ENCODE measurements at regions of chr1 and their contacts with region 1.

Region 1: DNA sequence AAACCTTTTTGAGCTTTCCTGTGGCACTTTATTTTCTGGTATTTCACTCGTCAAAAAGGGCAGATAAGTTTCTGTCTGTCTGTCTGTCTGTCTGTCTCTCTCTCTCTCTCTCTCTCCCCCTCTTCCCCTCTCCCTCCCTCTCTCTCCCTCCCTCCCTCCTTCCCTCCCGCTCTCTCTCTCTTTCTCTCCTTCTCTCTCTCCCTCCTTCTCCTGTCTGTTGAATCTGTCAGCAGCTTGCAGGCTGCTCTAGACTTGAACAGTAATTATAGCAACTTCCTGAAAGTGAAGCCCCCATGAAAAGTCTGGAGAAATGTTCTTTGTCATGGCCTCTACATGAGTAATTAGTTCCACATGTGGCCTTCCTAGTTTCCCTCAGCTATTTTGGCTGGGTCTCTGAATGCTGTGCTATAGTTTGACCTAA is 275.2 kb upstream of the C1orf105 start:
- DNase-seq: no peak
- ATAC-seq: no peak
- H3K4me3 ChIP-seq: no peak overlapping the region
- H3K4me3 Mint-ChIP-seq: no peak overlapping the region
- H3K27ac ChIP-seq: no peak overlapping the region
- H3K27ac Mint-ChIP-seq: no peak overlapping the region
- H3K4me1 ChIP-seq: no peaks in the 10 kb centered on the region
- H3K4me1 Mint-ChIP-seq: peaks cover 0 to 4% (median 0%) of the 10 kb centered on the region in 3 donors
- H3K27me3 ChIP-seq: no peaks in the 10 kb centered on the region
- H3K27me3 Mint-ChIP-seq: no peaks in the 10 kb centered on the region

Region 2: DNA sequence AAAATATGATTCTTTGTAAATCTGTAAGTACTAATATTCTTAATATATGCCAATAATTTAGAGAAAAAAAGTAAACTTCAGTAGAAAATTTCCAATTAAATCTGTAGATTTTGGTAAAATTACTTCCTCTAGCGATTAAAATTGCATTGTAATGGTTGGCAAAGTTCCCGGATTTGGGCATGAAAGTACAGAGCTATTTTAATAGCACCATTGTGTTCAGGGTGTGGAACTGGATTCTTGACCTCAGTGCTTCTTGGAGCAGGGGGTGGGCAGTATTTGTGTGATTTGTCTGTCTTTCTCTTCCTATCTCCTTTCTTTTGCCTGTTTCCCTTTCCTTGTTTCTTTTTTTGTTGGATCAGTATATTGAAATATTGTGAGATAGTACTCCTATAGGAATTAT is 231.9 kb before region 1 on chr1:
- CTCF ChIA-PET with region 1: no interaction called
- POLR2A ChIA-PET with region 1: no interaction called
- DNase-seq: no peak
- ATAC-seq: no peak
- H3K4me3 ChIP-seq: no peak overlapping the region
- H3K4me3 Mint-ChIP-seq: no peak overlapping the region
- H3K27ac ChIP-seq: no peak overlapping the region
- H3K27ac Mint-ChIP-seq: no peak overlapping the region
- H3K4me1 ChIP-seq: no peaks in the 10 kb centered on the region
- H3K4me1 Mint-ChIP-seq: no peaks in the 10 kb centered on the region
- H3K27me3 ChIP-seq: peaks cover 0 to 2% of the 10 kb centered on the region in 2 experiments
- H3K27me3 Mint-ChIP-seq: no peaks in the 10 kb centered on the region

Region 3: GRCh38 chr1:172125812-172126430 is 19.3 kb before region 1 on chr1:
- CTCF ChIA-PET with region 1: interaction called in 1 of 2 experiments, 10 read pairs
- POLR2A ChIA-PET with region 1: no interaction called
- DNase-seq: no peak
- ATAC-seq: no peak
- H3K4me3 ChIP-seq: no peak overlapping the region
- H3K4me3 Mint-ChIP-seq: no peak overlapping the region
- H3K27ac ChIP-seq: no peak overlapping the region
- H3K27ac Mint-ChIP-seq: no peak overlapping the region
- H3K4me1 ChIP-seq: no peaks in the 10 kb centered on the region
- H3K4me1 Mint-ChIP-seq: peaks cover 0 to 3% (median 0%) of the 10 kb centered on the region in 3 donors
- H3K27me3 ChIP-seq: no peaks in the 10 kb centered on the region
- H3K27me3 Mint-ChIP-seq: no peaks in the 10 kb centered on the region